IMR-90 (cell line): ENCODE measurements at regions of chr1 and their contacts with region 1.

Region 1: DNA sequence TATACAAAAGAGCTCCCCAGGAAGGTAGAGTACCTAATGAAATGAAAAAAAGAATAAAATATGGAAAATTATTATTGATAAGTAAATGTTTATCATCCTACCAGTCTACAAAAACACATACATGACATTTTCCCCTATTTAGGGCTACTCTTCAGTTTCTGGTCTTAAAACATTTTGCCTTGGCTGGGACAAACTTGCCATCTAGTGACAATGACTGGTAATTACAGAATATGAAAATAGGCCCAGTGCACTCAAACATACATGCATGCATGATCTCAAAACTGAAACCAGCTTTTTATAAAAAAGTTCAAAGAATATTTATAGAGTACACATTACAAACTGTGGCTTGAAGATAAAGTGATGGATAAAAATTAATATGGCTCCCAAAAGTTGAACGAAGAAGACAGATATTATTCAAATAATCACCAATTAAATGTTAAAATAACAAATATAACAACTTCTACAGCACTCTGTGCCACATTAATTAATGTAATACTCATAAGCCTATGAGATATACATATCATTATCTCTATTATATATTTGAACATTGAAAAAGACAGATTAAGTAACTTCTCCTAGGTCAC is 10.5 kb upstream of the RNPC3 start:
- DNase-seq: peak; percentile 63
- ATAC-seq: peak; percentile 83
- H3K4me3 ChIP-seq: no peak overlapping the region
- H3K27ac ChIP-seq: no peak overlapping the region
- H3K4me1 ChIP-seq: no peaks in the 10 kb centered on the region
- H3K27me3 ChIP-seq: no peaks in the 10 kb centered on the region
- CTCF ChIP-seq: peak; percentile 83
- POLR2A ChIP-seq: no peak
- RAD21 ChIP-seq: peak; percentile 87

Region 2: GRCh38 chr1:101520302-101520701 is 1994.7 kb before region 1 on chr1:
- CTCF ChIA-PET with region 1: no interaction called
- POLR2A ChIA-PET with region 1: no interaction called
- dilution Hi-C with region 1: no loop called
- in situ Hi-C with region 1: no loop called
- intact Hi-C with region 1: loop called (anchors 5 kb)
- DNase-seq: peak; percentile 26
- ATAC-seq: peak; percentile 75
- H3K4me3 ChIP-seq: no peak overlapping the region
- H3K27ac ChIP-seq: no peak overlapping the region
- H3K4me1 ChIP-seq: no peaks in the 10 kb centered on the region
- H3K27me3 ChIP-seq: no peaks in the 10 kb centered on the region
- CTCF ChIP-seq: peak; percentile 68
- POLR2A ChIP-seq: no peak
- RAD21 ChIP-seq: peak; percentile 67

Region 3: DNA sequence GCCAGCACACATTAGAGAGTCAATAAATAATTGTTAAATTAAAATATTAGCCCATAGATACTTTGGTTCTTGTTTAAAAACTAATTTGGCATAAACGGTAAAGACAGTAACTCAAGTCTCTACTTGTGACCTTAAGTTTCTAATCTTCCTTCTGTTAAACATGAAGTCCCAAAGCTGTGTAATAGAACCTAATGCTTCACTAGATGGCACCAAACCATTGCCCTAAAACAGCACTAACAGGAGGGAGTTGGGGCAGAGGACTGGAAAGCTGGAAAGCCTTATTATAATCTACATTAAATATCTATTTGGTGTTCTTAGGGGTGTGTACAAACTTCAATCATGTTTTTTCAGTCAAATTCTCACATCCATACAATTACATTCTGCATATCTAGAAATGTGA is 1694.9 kb before region 1 on chr1:
- CTCF ChIA-PET with region 1: no interaction called
- POLR2A ChIA-PET with region 1: no interaction called
- dilution Hi-C with region 1: no loop called
- in situ Hi-C with region 1: no loop called
- intact Hi-C with region 1: loop called (anchors 5 kb)
- DNase-seq: peak; percentile 15
- ATAC-seq: no peak
- H3K4me3 ChIP-seq: no peak overlapping the region
- H3K27ac ChIP-seq: no peak overlapping the region
- H3K4me1 ChIP-seq: no peaks in the 10 kb centered on the region
- H3K27me3 ChIP-seq: no peaks in the 10 kb centered on the region
- CTCF ChIP-seq: peak; percentile 30; the same call in 1 of the 2 replicates
- POLR2A ChIP-seq: no peak
- RAD21 ChIP-seq: peak; percentile 37

Region 4: DNA sequence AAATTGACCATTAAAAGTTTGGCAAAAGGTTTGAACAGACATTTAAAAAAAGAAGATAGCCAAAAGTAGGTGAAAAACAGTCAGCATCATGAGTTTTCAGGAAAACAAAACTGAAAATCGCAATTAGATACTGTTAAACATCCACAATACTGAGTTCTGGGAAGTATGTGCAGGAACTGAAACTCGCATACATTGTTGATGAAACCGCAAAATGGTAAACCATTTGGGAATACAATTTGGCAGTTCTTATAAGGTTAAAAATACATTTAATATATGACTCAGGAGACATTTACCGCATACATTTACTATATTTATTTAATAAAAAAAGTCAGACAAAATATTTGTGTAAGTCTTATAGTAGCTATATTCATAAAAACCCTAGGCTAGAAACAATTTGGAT is 799.9 kb before region 1 on chr1:
- CTCF ChIA-PET with region 1: no interaction called
- POLR2A ChIA-PET with region 1: no interaction called
- dilution Hi-C with region 1: no loop called
- in situ Hi-C with region 1: no loop called
- intact Hi-C with region 1: loop called (anchors 5 kb)
- DNase-seq: no peak
- ATAC-seq: no peak
- H3K4me3 ChIP-seq: no peak overlapping the region
- H3K27ac ChIP-seq: no peak overlapping the region
- H3K4me1 ChIP-seq: no peaks in the 10 kb centered on the region
- H3K27me3 ChIP-seq: no peaks in the 10 kb centered on the region
- CTCF ChIP-seq: no peak
- POLR2A ChIP-seq: no peak
- RAD21 ChIP-seq: no peak

Region 5: DNA sequence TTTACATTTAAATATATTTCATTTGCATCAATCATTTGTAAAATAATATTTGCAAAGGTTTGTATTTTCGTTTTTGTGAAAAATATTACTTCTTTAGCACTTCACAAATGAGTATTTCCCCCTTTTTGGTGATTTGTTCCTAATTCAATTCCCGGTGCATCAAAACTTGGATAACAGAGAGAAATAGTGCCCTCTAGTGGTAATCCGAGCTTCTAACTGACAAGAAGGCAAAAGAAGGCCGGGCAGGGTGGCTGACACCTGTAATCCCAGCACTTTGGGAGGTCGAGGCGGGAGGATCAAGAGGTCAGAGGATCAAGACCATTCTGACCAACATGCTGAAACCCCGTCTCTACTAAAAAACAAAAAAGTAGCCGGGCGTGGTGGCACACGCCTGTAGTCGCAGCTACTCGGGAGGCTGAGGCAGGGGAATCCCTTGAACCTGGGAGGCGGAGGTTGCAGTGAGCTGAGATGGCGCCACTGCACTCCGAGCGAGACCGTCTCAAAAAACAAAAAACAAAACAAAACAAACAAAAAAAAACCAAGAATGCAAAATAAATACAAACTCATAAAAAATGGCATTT is 544.4 kb before region 1 on chr1:
- CTCF ChIA-PET with region 1: no interaction called
- POLR2A ChIA-PET with region 1: no interaction called
- dilution Hi-C with region 1: no loop called
- in situ Hi-C with region 1: no loop called
- intact Hi-C with region 1: loop called (anchors 1 kb)
- DNase-seq: peak; percentile 75
- ATAC-seq: no peak
- H3K4me3 ChIP-seq: no peak overlapping the region
- H3K27ac ChIP-seq: no peak overlapping the region
- H3K4me1 ChIP-seq: no peaks in the 10 kb centered on the region
- H3K27me3 ChIP-seq: no peaks in the 10 kb centered on the region
- CTCF ChIP-seq: peak; percentile 69
- POLR2A ChIP-seq: no peak
- RAD21 ChIP-seq: peak; percentile 80

Region 6: DNA sequence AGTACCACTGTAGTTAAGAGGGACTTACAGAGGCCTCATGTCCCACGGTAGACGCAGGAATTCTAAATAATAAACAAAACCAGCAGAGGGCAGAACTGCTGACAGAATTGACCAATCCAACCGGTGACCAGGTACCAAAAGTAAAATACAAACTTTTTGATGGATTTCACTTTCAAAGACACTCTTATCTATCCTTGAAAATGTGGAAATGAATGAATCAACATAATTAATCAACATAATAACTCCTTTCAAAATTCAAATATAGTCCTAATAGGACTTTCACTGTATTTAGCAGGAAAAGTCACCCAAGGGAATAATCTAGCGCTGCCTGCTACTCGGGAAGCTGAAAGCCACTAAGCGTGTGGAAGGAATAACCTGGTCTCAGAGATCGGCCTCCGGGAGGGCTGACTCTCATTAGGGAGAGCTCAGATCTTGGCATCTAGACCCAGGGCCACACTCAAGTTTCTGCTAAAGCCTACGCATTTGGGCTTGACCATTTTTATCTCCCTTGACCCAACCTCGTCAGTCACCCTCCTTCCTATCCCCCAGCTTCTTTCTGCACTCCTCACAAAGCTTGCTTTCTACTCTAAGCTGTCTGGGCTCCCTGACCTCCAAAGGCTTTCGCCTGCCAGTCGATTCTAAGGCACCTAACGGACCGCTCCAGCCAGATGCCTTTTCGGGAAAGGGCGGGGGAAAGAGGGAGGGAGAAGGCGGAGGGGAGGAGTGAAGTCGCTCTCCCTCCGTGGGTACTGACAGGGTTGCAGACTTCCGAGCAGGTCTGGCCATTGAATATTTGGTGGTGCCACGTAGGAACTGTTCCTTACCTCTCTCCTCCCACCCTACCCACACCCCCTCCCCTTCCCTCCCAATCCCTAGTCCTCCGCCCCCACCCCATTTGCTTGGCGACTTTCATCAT is 408.3 kb before region 1 on chr1:
- CTCF ChIA-PET with region 1: interaction called, 6 read pairs
- POLR2A ChIA-PET with region 1: no interaction called
- dilution Hi-C with region 1: no loop called
- in situ Hi-C with region 1: no loop called
- intact Hi-C with region 1: loop called (anchors 1 kb)
- DNase-seq: peak; percentile 30
- ATAC-seq: peak; percentile 72
- H3K4me3 ChIP-seq: peak overlapping the region; percentile 55
- H3K27ac ChIP-seq: no peak overlapping the region
- H3K4me1 ChIP-seq: no peaks in the 10 kb centered on the region
- H3K27me3 ChIP-seq: peaks cover 2% of the 10 kb centered on the region
- CTCF ChIP-seq: peak; percentile 54
- POLR2A ChIP-seq: no peak
- RAD21 ChIP-seq: peak; percentile 53